ENCODE measurements at regions of chr1 and their contacts with region 1.

Region 1: DNA sequence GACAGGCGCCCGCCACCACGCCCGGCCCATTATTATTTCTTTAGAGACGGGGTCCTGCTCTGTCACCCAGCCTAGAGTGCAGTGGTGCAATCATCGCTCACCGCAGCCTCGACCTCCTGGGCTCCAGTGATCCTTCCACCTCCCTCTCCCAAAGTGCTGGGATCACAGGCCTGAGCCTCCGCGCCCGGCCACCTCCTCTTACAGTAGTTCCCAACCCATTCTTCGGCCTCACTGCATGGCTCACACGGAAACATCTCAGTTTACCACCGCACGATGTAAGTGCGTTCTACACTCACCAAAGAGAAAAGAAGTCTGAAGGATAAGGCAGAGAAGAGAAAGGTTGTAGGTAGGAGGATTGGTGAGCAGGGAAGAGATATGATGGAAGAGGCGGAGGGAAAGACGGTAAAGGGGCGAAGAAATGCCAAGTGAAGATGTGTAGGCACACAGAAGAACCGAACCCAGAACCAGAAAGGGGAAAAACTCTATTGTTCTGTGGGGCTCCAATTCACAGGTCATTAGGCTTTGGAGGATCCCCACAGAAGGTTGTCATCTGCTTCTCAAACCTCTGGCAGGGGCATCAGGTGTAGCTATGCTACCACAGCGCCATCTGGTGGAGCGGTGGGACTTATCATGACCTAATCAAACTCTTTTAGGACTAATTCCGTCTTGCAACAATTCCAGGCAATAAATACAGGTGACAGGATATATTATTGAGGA is 504.2 kb downstream of the SMYD3 start:
- DNase-seq: peak; percentile 70 to 90 (median 80)
- ATAC-seq: peak; percentile 63
- H3K4me3 ChIP-seq: no peak overlapping the region
- H3K4me3 Mint-ChIP-seq: no peak overlapping the region
- H3K27ac ChIP-seq: no peak overlapping the region
- H3K27ac Mint-ChIP-seq: no peak overlapping the region
- H3K4me1 ChIP-seq: no peaks in the 10 kb centered on the region
- H3K4me1 Mint-ChIP-seq: no peaks in the 10 kb centered on the region
- H3K27me3 ChIP-seq: no peaks in the 10 kb centered on the region
- H3K27me3 Mint-ChIP-seq: no peaks in the 10 kb centered on the region
- CTCF ChIP-seq: peak; percentile 95

Region 2: GRCh38 chr1:245079021-245079609 is 923.8 kb before region 1 on chr1:
- CTCF ChIA-PET with region 1: no interaction called
- POLR2A ChIA-PET with region 1: no interaction called
- intact Hi-C with region 1: loop called (anchors 2 to 10 kb)
- DNase-seq: peak in 1 of 14 experiments; percentile 9
- ATAC-seq: no peak
- H3K4me3 ChIP-seq: no peak overlapping the region
- H3K4me3 Mint-ChIP-seq: no peak overlapping the region
- H3K27ac ChIP-seq: no peak overlapping the region
- H3K27ac Mint-ChIP-seq: no peak overlapping the region
- H3K4me1 ChIP-seq: no peaks in the 10 kb centered on the region
- H3K4me1 Mint-ChIP-seq: no peaks in the 10 kb centered on the region
- H3K27me3 ChIP-seq: no peaks in the 10 kb centered on the region
- H3K27me3 Mint-ChIP-seq: no peaks in the 10 kb centered on the region
- CTCF ChIP-seq: peak; percentile 19

Region 3: GRCh38 chr1:245322673-245323441 is 680.0 kb before region 1 on chr1:
- CTCF ChIA-PET with region 1: no interaction called
- POLR2A ChIA-PET with region 1: no interaction called
- intact Hi-C with region 1: loop called in 1 of 2 experiments (anchors 10 kb)
- DNase-seq: no peak
- ATAC-seq: no peak
- H3K4me3 ChIP-seq: no peak overlapping the region
- H3K4me3 Mint-ChIP-seq: no peak overlapping the region
- H3K27ac ChIP-seq: no peak overlapping the region
- H3K27ac Mint-ChIP-seq: no peak overlapping the region
- H3K4me1 ChIP-seq: no peaks in the 10 kb centered on the region
- H3K4me1 Mint-ChIP-seq: no peaks in the 10 kb centered on the region
- H3K27me3 ChIP-seq: no peaks in the 10 kb centered on the region
- H3K27me3 Mint-ChIP-seq: no peaks in the 10 kb centered on the region
- CTCF ChIP-seq: no peak

Region 4: GRCh38 chr1:245887829-245888228 is 115.1 kb before region 1 on chr1:
- CTCF ChIA-PET with region 1: interaction called, 6 read pairs
- POLR2A ChIA-PET with region 1: interaction called, 4 read pairs
- intact Hi-C with region 1: loop called in 1 of 2 experiments (anchors 2 kb)
- DNase-seq: no peak
- ATAC-seq: no peak
- H3K4me3 ChIP-seq: no peak overlapping the region
- H3K4me3 Mint-ChIP-seq: no peak overlapping the region
- H3K27ac ChIP-seq: no peak overlapping the region
- H3K27ac Mint-ChIP-seq: no peak overlapping the region
- H3K4me1 ChIP-seq: no peaks in the 10 kb centered on the region
- H3K4me1 Mint-ChIP-seq: no peaks in the 10 kb centered on the region
- H3K27me3 ChIP-seq: no peaks in the 10 kb centered on the region
- H3K27me3 Mint-ChIP-seq: no peaks in the 10 kb centered on the region
- CTCF ChIP-seq: no peak